Pancreas (tissue), 10 donors: ENCODE measurements at regions of chr19 and their contacts with region 1.

Region 1: DNA sequence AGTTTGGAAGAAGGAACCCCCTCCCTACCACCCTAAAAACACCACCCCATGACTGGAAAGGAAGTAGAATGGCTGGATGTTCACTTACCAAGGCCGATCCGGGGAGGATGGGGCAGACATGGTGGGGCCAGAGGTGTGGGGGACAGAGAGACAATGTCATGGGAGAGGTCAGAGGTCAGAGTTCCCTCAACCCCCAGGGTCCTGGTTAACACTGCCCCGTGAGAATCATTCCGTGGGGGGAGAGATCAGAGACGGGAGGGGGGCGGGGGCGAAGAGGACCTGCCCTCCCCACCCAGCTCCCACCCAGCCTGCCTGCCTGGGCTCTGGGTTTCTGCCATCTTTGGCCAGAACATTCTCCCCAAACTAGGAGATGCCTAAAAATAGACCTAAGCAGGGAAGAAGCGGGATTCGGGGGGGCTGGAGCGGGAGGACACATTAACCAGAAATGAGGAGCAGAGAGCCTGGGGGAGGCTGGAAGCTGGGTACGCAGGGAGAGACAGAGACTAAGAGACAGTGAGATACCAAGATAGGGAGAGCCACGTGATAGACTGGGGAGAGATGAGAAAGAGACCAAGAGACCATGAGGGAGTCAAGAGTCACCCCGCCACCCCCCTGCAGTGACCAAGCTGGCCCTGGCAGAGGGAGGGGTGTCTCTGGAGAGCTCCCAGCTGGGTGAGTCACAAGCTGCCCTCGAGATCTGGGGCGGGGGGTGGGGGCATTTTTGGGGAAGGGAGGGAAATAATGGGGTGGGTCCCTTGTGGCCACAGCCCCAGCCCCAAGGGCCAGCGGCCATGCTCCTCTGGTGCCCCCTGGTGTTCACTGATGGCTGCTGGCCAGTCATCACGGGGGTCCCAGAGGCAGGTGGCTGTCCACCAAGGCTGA is 6.1 kb upstream of the KANK2 start:
- DNase-seq: peak in 5 of 6 donors; percentile 44 to 79 (median 71)
- ATAC-seq: peak; percentile 28 to 76 (median 62)
- H3K4me3 ChIP-seq: no peak overlapping the region
- H3K27ac ChIP-seq: peak overlapping the region in 1 of 4 donors; percentile 28
- H3K4me1 ChIP-seq: peaks cover 0 to 2% (median 0%) of the 10 kb centered on the region in 3 donors
- H3K27me3 ChIP-seq: no peaks in the 10 kb centered on the region
- CTCF ChIP-seq: peak; percentile 46 to 64 (median 58)

Region 2: GRCh38 chr19:11035441-11036377 is 167.7 kb before region 1 on chr19:
- intact Hi-C with region 1: loop called in 1 of 3 experiments (anchors 10 kb)
- DNase-seq: peak; percentile 84 to 95 (median 93)
- ATAC-seq: peak; percentile 97 to 98 (median 97)
- H3K4me3 ChIP-seq: no peak overlapping the region
- H3K27ac ChIP-seq: peak overlapping the region in 1 of 4 donors; percentile 22
- H3K4me1 ChIP-seq: peaks cover 0 to 2% (median 0%) of the 10 kb centered on the region in 3 donors
- H3K27me3 ChIP-seq: no peaks in the 10 kb centered on the region
- CTCF ChIP-seq: peak; percentile 77 to 84 (median 82)

Region 3: DNA sequence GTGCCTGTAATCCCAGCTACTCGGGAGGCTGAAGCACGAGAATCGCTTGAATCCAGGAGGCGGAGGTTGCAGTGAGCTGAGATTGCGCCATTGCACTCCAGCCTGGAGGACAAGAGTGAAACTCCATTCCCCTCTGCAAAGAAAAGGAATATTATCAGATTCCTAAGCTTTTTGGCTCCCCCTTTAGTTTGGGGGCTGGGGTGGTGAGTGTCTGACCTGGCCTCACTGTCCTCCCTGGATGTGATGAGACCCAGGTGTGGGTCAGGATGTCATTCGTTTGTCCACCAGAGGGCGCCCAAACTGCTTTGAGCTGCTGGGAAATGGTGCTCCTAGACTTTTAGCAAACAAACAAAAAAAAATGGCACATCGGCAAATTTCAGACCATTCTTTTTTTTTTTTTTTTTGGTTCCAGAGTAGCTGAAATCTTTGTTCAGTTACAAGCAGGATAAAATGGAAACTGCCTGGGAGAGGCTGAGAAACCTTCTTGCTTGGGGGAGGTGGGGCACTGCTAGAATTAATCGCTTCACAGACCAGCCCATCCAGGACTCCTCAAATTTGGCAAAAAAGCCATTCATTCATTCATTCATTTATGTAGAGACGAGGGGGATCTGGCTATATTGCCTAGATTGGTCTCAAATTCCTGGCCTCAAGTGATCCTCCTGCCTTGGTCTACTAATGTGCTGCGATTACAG is 77.3 kb before region 1 on chr19:
- intact Hi-C with region 1: loop called in 1 of 3 experiments (anchors 5 kb)
- DNase-seq: peak; percentile 63 to 89 (median 80)
- ATAC-seq: peak; percentile 57 to 83 (median 77)
- H3K4me3 ChIP-seq: no peak overlapping the region
- H3K27ac ChIP-seq: no peak overlapping the region
- H3K4me1 ChIP-seq: no peaks in the 10 kb centered on the region
- H3K27me3 ChIP-seq: no peaks in the 10 kb centered on the region
- CTCF ChIP-seq: peak; percentile 49 to 77 (median 74)

Region 4: DNA sequence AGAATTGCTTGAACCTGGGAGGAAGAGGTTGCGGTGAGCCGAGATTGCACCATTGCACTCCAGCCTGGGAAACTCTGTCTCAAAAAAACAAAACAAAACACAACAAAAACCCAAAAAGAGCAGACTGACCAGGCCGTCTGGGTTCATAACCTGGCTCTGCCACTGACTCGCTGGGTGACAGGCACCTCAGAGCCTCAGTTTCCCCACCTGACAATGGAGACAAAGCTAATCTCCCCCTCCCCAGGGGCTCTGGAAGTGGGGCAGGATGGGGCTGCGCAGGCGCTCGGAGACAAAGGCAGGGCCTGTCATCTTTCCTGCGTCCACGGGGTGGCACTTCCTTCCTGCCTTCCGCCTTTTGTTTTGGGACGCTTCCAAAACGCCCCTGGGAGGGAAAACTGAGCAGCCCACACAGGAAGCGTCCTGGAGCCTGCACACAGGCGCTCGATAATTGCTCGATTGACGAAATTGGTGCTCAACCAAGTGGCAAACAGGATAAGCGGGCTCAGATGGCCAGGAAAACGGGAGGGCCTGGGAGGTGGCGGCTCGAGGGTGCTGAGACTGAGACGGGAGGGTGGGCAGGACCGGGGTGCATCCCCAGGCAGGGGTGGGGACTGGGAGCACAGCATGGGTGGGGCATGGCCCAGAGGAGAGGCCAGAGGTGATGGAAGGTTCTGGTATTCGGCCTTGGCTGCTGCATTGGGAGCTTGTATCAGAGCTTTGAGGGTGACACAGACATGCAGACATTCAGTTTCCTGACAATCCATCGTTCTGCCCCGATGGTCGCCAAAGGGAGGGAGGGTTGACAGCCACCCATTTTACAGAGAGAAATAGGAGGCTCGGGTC is 65.7 kb before region 1 on chr19:
- intact Hi-C with region 1: loop called in 2 of 3 experiments (anchors 2 to 5 kb)
- DNase-seq: peak; percentile 68 to 89 (median 78)
- ATAC-seq: peak; percentile 63 to 73 (median 70)
- H3K4me3 ChIP-seq: peak overlapping the region in 2 of 4 donors; percentile 6 to 31
- H3K27ac ChIP-seq: peak overlapping the region; percentile 14 to 65 (median 54)
- H3K4me1 ChIP-seq: peaks cover 4 to 21% (median 12%) of the 10 kb centered on the region in 3 donors
- H3K27me3 ChIP-seq: no peaks in the 10 kb centered on the region
- CTCF ChIP-seq: peak; percentile 35 to 72 (median 64)

Region 5: DNA sequence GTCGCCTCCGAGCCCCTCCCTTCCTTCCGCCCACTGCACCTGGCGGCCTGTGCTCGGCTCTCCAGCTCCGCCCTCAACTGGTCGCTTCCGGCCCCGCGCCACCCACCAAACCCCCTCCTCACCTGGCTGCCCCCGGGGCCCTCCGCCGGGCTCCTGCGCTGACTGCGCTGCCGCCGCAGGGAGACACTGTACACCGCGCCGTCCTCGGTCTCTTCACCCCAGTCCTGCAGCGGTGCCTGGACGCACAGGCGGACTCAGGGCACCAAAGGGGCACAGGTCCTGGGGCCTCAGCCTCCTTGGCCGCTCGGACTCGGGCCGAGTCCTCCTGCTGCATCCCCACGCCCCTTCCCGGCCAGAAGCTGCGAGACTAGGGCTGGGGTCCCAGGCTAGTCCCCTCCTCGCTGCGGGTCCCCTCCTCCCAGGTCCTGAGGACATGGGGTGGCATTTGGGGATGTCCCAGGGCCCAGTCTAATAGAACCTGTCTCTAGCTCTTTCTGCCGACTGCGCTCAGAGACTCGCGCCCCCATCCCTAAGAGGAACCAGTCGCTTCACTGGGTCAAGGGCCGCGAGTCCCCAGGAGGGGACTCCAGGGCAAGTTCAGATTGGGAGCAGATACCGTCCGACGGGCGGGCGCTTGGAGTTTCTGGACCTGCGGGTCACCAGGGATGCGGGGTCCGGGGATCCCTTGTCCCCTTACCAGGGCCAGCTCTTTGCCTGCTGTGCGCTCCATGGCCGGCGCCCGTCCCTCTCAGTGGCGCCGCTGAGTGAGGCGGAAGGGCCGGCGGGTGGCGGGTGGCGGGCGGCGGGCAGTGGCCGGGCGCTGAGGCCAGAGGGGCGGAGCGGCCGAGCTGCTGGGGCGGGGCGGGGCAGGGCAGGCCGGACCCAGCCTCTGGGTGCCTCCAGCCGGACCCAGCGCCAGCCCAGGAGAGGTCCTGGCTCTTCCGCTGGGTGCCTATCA is 215.4 kb after region 1 on chr19 and contains the start of gene RGL3:
- intact Hi-C with region 1: no loop called
- DNase-seq: peak; percentile 60 to 86 (median 67)
- ATAC-seq: peak; percentile 71 to 81 (median 77)
- H3K4me3 ChIP-seq: peak within 1 kb of the TSS; percentile 27 to 76 (median 64)
- H3K27ac ChIP-seq: peak within 1 kb of the TSS; percentile 73 to 88 (median 76)
- H3K4me1 ChIP-seq: peaks cover 0 to 6% (median 0%) of the 10 kb centered on the region in 3 donors
- H3K27me3 ChIP-seq: no peaks in the 10 kb centered on the region
- CTCF ChIP-seq: no peak
- total RNA-seq, gene RGL3: 22.3 to 71.1 (median 33.7) TPM